Cardiac septum (tissue), 1 donor: ENCODE measurements at regions of chr12 and their contacts with region 1.

Region 1: GRCh38 chr12:18139989-18140596 is 50.1 kb upstream of the RERGL start:
- DNase-seq: no peak

Region 2: GRCh38 chr12:18108611-18109010 is 31.5 kb before region 1 on chr12:
- intact Hi-C with region 1: no loop called
- DNase-seq: no peak

Region 3: DNA sequence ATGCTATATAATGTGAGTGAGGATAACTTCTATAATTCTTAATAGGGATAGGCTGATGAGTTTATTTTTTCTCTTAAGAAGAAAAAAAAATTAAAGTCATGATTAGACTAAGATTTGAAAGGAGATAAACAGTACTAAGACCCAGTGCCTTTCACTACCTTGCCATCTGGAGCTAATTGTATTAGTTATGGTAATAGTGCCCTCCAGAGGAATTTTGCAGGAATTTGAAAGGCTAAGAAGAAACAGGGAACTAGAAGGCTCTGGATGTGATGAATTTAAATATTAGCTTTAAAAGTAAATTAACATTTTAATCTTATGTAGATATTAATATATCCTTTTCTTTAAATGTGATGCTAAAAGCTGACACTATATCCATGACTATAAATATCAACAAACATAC is 84.7 kb after region 1 on chr12:
- intact Hi-C with region 1: loop called (anchors 10 kb)
- DNase-seq: no peak